ENCODE measurements at regions of chr15 and their contacts with region 1.

Region 1: DNA sequence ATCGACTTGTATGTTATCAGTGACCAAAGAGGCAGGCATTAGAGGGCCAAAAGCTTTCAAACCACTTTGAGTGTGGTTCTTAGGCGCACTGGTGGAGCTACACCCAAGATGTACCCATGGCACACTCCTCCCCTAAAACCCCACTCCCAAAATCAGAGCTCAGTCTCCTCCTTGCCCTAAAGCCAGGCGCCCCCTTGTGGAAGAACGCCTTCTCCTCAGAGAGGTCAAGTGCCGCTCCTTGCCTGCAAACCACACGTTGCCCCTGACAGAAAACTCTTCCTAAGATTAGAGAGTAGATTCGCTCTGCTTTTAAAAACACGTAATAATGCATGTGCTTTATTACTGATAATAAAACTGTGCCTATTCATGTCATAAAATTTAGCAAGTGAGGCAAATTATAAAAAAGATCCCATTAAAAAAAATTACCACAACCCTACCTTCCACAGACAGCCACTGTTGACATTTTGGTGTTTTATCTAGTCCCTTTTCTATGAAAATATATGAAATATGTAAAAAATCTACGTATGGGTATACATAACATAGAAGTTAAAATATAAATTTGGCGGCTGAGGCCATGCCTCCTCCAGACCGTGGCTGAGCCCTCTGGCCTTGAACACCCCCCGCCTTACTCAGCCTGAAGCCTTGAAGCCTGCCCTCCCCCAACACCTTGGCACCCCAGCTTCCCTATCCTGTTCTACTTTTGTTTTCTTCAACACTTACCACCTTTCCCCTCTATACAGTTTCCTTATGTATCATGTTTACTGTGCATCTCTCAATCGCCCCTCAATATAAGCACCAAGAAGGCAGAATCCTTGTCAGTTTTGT is 33.5 kb downstream of the BCL2L10 start:
- DNase-seq: peak; percentile 81
- ATAC-seq: peak; percentile 64
- H3K4me3 ChIP-seq: no peak overlapping the region
- H3K4me3 Mint-ChIP-seq: no peak overlapping the region
- H3K27ac ChIP-seq: no peak overlapping the region
- H3K27ac Mint-ChIP-seq: no peak overlapping the region
- H3K4me1 ChIP-seq: peaks cover 11 to 14% of the 10 kb centered on the region in 2 donors
- H3K4me1 Mint-ChIP-seq: peaks cover 25% of the 10 kb centered on the region
- H3K27me3 ChIP-seq: peaks cover 0 to 9% (median 0%) of the 10 kb centered on the region in 4 experiments
- H3K27me3 Mint-ChIP-seq: peaks cover 6% of the 10 kb centered on the region
- CTCF ChIP-seq: peak; percentile 93

Region 2: GRCh38 chr15:51888593-51889195 is 190.4 kb before region 1 on chr15:
- CTCF ChIA-PET with region 1: interaction called, 15 read pairs
- POLR2A ChIA-PET with region 1: no interaction called
- intact Hi-C with region 1: loop called (anchors 1 kb)
- DNase-seq: peak; percentile 35
- ATAC-seq: no peak
- H3K4me3 ChIP-seq: no peak overlapping the region
- H3K4me3 Mint-ChIP-seq: no peak overlapping the region
- H3K27ac ChIP-seq: no peak overlapping the region
- H3K27ac Mint-ChIP-seq: no peak overlapping the region
- H3K4me1 ChIP-seq: no peaks in the 10 kb centered on the region
- H3K4me1 Mint-ChIP-seq: peaks cover 5% of the 10 kb centered on the region
- H3K27me3 ChIP-seq: no peaks in the 10 kb centered on the region
- H3K27me3 Mint-ChIP-seq: no peaks in the 10 kb centered on the region
- CTCF ChIP-seq: peak; percentile 92

Region 3: GRCh38 chr15:51971375-51972133 is 107.5 kb before region 1 on chr15 and contains the start of gene LEO1:
- CTCF ChIA-PET with region 1: interaction called, 22 read pairs
- POLR2A ChIA-PET with region 1: no interaction called
- intact Hi-C with region 1: no loop called
- DNase-seq: peak; percentile 96
- ATAC-seq: peak; percentile 92
- H3K4me3 ChIP-seq: peak within 1 kb of the TSS; percentile 53 to 96 (median 90)
- H3K4me3 Mint-ChIP-seq: peak within 1 kb of the TSS; percentile 96
- H3K27ac ChIP-seq: peak within 1 kb of the TSS; percentile 46 to 78
- H3K27ac Mint-ChIP-seq: peak within 1 kb of the TSS; percentile 96
- H3K4me1 ChIP-seq: peaks cover 7 to 14% of the 10 kb centered on the region in 2 donors
- H3K4me1 Mint-ChIP-seq: peaks cover 22% of the 10 kb centered on the region
- H3K27me3 ChIP-seq: no peaks in the 10 kb centered on the region
- H3K27me3 Mint-ChIP-seq: no peaks in the 10 kb centered on the region
- CTCF ChIP-seq: peak; percentile 39
- total RNA-seq, gene LEO1: 17.9 and 19.1 TPM in 2 replicates

Region 4: GRCh38 chr15:51982013-51982769 is 96.9 kb before region 1 on chr15:
- CTCF ChIA-PET with region 1: interaction called, 25 read pairs
- POLR2A ChIA-PET with region 1: no interaction called
- intact Hi-C with region 1: loop called (anchors 1 kb)
- DNase-seq: peak; percentile 72
- ATAC-seq: peak; percentile 87
- H3K4me3 ChIP-seq: no peak overlapping the region
- H3K4me3 Mint-ChIP-seq: peak overlapping the region; percentile 17
- H3K27ac ChIP-seq: no peak overlapping the region
- H3K27ac Mint-ChIP-seq: no peak overlapping the region
- H3K4me1 ChIP-seq: peaks cover 6 to 8% of the 10 kb centered on the region in 2 donors
- H3K4me1 Mint-ChIP-seq: peaks cover 9% of the 10 kb centered on the region
- H3K27me3 ChIP-seq: no peaks in the 10 kb centered on the region
- H3K27me3 Mint-ChIP-seq: no peaks in the 10 kb centered on the region
- CTCF ChIP-seq: peak; percentile 76

Region 5: GRCh38 chr15:52039925-52040781 is 38.9 kb before region 1 on chr15:
- CTCF ChIA-PET with region 1: interaction called, 11 read pairs
- POLR2A ChIA-PET with region 1: no interaction called
- intact Hi-C with region 1: no loop called
- DNase-seq: no peak
- ATAC-seq: no peak
- H3K4me3 ChIP-seq: no peak overlapping the region
- H3K4me3 Mint-ChIP-seq: no peak overlapping the region
- H3K27ac ChIP-seq: no peak overlapping the region
- H3K27ac Mint-ChIP-seq: no peak overlapping the region
- H3K4me1 ChIP-seq: peaks cover 0 to 3% of the 10 kb centered on the region in 2 donors
- H3K4me1 Mint-ChIP-seq: peaks cover 37% of the 10 kb centered on the region
- H3K27me3 ChIP-seq: no peaks in the 10 kb centered on the region
- H3K27me3 Mint-ChIP-seq: no peaks in the 10 kb centered on the region
- CTCF ChIP-seq: no peak

Region 6: DNA sequence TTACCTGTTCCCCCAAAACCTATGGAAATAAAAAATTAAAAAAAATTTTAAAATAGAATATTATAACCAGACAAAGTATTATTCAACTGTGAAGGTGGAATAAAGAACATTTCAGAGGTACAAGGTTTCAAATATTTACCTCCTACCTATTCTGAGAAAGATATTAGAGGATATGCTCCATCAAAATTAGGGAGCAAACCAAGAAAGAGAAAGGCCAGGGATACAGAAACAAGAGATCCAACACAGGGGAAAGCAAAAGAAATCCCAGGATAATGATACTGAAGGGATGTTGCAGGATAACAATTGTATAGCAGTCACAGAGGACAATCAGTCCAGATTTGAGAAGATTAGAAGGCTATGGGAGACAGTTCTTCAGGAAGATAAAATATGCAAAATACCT is 11.1 kb after region 1 on chr15:
- CTCF ChIA-PET with region 1: interaction called, 13 read pairs
- POLR2A ChIA-PET with region 1: interaction called, 4 read pairs
- intact Hi-C with region 1: no loop called
- DNase-seq: no peak
- ATAC-seq: no peak
- H3K4me3 ChIP-seq: no peak overlapping the region
- H3K4me3 Mint-ChIP-seq: no peak overlapping the region
- H3K27ac ChIP-seq: no peak overlapping the region
- H3K27ac Mint-ChIP-seq: no peak overlapping the region
- H3K4me1 ChIP-seq: no peaks in the 10 kb centered on the region
- H3K4me1 Mint-ChIP-seq: no peaks in the 10 kb centered on the region
- H3K27me3 ChIP-seq: peaks cover 0 to 4% (median 0%) of the 10 kb centered on the region in 4 experiments
- H3K27me3 Mint-ChIP-seq: peaks cover 9% of the 10 kb centered on the region
- CTCF ChIP-seq: no peak